CD8-positive, alpha-beta memory T cell (primary cell): ENCODE measurements at regions of chrX and their contacts with region 1.

Region 1: DNA sequence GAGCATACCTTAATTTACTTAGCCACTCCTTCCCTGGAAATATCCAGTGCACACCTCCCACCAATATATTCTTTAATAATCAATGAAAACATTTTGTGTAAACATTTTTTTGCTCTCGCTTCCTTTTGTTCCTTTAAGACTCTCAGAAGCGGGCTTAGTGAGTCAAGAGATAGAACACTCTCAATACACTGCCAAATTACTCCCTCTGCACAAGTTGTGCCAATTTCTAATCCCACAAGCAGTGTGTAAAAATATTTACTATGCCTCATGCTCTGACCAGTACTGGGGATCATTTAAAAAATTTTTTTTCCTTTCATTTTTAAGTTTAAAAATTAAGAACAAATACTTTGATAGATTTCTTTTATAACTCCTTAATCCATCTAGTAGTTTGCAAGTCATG is 5.1 kb downstream of the MORF4L2 start:
- DNase-seq: no peak
- H3K4me3 ChIP-seq: no peak overlapping the region
- H3K4me3 Mint-ChIP-seq: no peak overlapping the region
- H3K27ac ChIP-seq: no peak overlapping the region
- H3K27ac Mint-ChIP-seq: peak overlapping the region in 1 of 8 donors; percentile 64
- H3K4me1 ChIP-seq: peaks cover 8% of the 10 kb centered on the region
- H3K4me1 Mint-ChIP-seq: peaks cover 9 to 26% (median 19%) of the 10 kb centered on the region in 3 donors
- H3K27me3 ChIP-seq: no peaks in the 10 kb centered on the region
- H3K27me3 Mint-ChIP-seq: peaks cover 0 to 3% of the 10 kb centered on the region in 2 donors

Region 2: DNA sequence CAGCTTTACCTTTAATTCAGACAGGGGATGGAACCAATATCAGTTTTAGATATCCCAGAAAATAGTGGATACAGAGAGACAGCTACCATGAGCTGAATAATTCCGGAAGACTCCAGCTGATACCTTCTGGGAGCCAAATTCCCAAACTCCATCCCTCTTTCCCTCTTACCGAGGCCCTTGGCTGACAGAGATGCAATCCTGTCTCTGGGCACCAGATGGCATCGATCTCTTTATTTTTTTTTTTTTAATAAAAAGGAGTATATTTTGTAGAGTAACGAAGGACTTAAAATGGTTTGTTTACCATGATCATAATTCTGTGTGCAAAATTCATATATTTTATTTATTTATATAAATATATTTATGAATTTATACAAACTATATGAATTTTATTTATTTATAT is 193.1 kb before region 1 on chrX:
- CTCF ChIA-PET with region 1: no interaction called
- POLR2A ChIA-PET with region 1: interaction called, 10 read pairs
- DNase-seq: no peak
- H3K4me3 ChIP-seq: no peak overlapping the region
- H3K4me3 Mint-ChIP-seq: no peak overlapping the region
- H3K27ac ChIP-seq: no peak overlapping the region
- H3K27ac Mint-ChIP-seq: no peak overlapping the region
- H3K4me1 ChIP-seq: no peaks in the 10 kb centered on the region
- H3K4me1 Mint-ChIP-seq: peaks cover 0 to 3% (median 0%) of the 10 kb centered on the region in 3 donors
- H3K27me3 ChIP-seq: no peaks in the 10 kb centered on the region
- H3K27me3 Mint-ChIP-seq: peaks cover under 1 to 8% of the 10 kb centered on the region in 2 donors

Region 3: DNA sequence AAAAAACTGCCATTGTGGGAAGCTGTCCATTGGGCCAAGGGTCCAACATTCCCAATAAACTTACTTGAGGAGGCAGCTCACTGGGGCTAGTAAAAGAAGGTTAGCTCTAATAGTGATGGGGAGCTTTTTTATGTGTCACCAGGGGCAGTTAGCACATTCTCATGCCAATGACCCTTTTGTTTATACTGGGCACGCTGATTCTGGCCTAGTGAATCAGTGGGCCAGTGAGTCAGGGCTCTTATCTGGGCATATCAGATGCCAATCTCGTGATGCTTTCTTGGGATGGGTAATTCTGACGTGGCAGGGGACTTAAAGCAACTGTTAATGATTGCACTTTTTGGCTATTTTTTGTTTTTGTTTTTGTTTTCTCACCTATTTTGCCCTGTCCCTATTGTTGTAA is 24.8 kb before region 1 on chrX:
- CTCF ChIA-PET with region 1: no interaction called
- POLR2A ChIA-PET with region 1: no interaction called
- DNase-seq: no peak
- H3K4me3 ChIP-seq: no peak overlapping the region
- H3K4me3 Mint-ChIP-seq: no peak overlapping the region
- H3K27ac ChIP-seq: no peak overlapping the region
- H3K27ac Mint-ChIP-seq: no peak overlapping the region
- H3K4me1 ChIP-seq: no peaks in the 10 kb centered on the region
- H3K4me1 Mint-ChIP-seq: no peaks in the 10 kb centered on the region
- H3K27me3 ChIP-seq: no peaks in the 10 kb centered on the region
- H3K27me3 Mint-ChIP-seq: peaks cover 15 to 20% of the 10 kb centered on the region in 2 donors